WTC11 (cell line): ENCODE measurements at regions of chr14 and their contacts with region 1.

Region 1: GRCh38 chr14:21510735-21511657 is at the start of gene METTL3:
- DNase-seq: peak; percentile 93
- ATAC-seq: peak; percentile 98
- H3K4me3 Mint-ChIP-seq: peak within 1 kb of the TSS; percentile 96
- H3K27ac Mint-ChIP-seq: peak within 1 kb of the TSS; percentile 94
- H3K4me1 Mint-ChIP-seq: peaks cover 42% of the 10 kb centered on the region
- H3K27me3 Mint-ChIP-seq: no peaks in the 10 kb centered on the region
- CTCF ChIP-seq: no peak
- total RNA-seq, gene METTL3: 87.2 to 93.2 TPM (median 89.5 TPM) in 3 replicates

Region 2: DNA sequence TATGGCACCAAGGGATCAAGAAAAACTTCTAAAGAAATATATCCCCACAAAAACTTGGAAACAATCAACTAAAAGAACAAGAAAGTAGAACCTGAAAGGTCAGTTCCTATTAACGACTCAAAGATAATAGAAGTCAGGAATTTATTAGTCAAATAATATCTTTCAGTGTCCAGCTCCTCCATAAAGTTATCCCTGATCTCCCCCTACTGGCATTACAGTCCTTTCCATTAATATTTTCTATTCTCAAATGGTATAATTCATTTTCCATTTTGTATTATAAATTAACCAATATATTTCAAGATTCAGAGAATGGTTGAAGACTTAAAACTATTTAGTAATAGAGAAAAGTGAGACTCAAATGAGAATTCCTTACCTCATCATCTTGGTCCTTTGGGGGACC is 115.6 kb before region 1 on chr14:
- CTCF ChIA-PET with region 1: no interaction called
- POLR2A ChIA-PET with region 1: interaction called, 11 read pairs
- DNase-seq: no peak
- ATAC-seq: no peak
- H3K4me3 Mint-ChIP-seq: no peak overlapping the region
- H3K27ac Mint-ChIP-seq: no peak overlapping the region
- H3K4me1 Mint-ChIP-seq: no peaks in the 10 kb centered on the region
- H3K27me3 Mint-ChIP-seq: no peaks in the 10 kb centered on the region
- CTCF ChIP-seq: no peak

Region 3: DNA sequence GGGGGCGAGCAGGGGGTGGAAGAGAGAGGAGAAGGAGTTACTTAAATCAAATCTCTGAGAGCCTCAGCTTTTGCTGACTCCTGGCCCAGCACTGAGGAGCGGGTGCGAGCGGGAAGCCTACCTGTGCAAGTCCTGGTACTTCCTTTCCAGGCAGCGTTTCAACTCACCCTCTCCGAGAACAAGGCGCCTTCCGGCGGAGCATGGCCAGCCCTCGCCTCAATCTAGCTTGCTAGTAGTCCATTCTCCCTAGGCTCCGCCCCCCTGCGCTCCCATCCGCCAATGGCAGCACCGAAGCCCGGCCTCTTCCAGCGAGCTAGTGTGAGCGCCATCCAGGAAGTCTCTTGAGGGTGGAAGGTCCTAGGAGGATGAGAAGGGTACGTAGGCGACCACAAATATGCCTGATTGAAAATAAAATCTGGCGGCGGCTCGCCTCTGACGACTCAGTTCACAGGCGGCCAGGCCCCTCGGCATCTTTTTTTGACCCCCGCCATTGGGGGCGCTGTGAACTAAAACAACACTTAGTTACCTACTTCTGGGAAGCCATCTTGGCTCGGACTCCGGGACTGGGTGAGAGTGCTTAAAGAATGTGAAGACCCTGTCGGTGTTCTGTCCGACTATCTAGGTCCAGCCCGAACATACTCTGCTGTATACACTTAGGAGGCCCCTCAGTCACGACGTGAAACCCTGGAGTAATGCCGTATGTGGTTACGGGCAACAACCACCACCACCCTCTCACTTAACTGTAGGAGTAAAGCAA is 54.9 kb before region 1 on chr14 and contains the start of gene CHD8:
- CTCF ChIA-PET with region 1: interaction called, 6 read pairs
- POLR2A ChIA-PET with region 1: interaction called, 11 read pairs
- DNase-seq: peak; percentile 100
- ATAC-seq: peak; percentile 99
- H3K4me3 Mint-ChIP-seq: peak within 1 kb of the TSS; percentile 94
- H3K27ac Mint-ChIP-seq: peak within 1 kb of the TSS; percentile 100
- H3K4me1 Mint-ChIP-seq: peaks cover 23% of the 10 kb centered on the region
- H3K27me3 Mint-ChIP-seq: no peaks in the 10 kb centered on the region
- CTCF ChIP-seq: peak; percentile 51; the same call in 1 of the 2 replicates
- total RNA-seq, gene CHD8: 119 to 133 TPM (median 119 TPM) in 3 replicates

Region 4: GRCh38 chr14:21498553-21499526 is 12.2 kb before region 1 on chr14:
- CTCF ChIA-PET with region 1: interaction called, 11 read pairs
- POLR2A ChIA-PET with region 1: interaction called, 4 read pairs
- DNase-seq: no peak
- ATAC-seq: peak; percentile 65
- H3K4me3 Mint-ChIP-seq: no peak overlapping the region
- H3K27ac Mint-ChIP-seq: peak overlapping the region; percentile 59
- H3K4me1 Mint-ChIP-seq: peaks cover 29% of the 10 kb centered on the region
- H3K27me3 Mint-ChIP-seq: no peaks in the 10 kb centered on the region
- CTCF ChIP-seq: no peak